ENCODE measurements at regions of chr2 and their contacts with region 1.

Region 1: DNA sequence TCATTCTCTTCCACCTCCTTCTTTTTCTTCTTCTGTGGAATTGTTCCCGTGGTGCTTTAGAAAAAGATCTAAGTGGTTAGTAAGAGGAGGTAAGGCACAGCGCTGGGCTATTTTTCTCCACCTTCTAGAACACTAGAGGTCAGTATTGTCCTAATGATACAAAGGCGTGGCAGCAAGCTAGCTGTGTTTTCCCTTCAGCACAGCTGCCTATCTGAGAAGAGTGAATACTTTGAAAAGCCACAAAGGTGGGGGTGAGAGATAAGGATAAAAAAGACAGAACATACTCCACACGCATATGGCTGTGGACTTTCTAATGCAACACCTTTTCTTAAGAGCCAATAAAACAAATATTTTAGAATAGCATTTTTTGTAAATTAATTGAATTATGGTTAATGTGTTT is 2.1 kb downstream of the CNTNAP5 start:
- DNase-seq: no peak
- ATAC-seq: peak in 3 of 4 donors; percentile 55 to 70 (median 63)
- H3K4me3 ChIP-seq: no peak overlapping the region
- H3K27ac ChIP-seq: no peak overlapping the region
- H3K4me1 ChIP-seq: peaks cover 0 to 9% (median 0%) of the 10 kb centered on the region in 12 donors
- H3K27me3 ChIP-seq: peaks cover 4 to 46% (median 29%) of the 10 kb centered on the region in 9 donors
- CTCF ChIP-seq: peak; percentile 39 to 68 (median 62)
- POLR2A ChIP-seq: no peak

Region 2: GRCh38 chr2:122905431-122905830 is 1121.8 kb before region 1 on chr2:
- intact Hi-C with region 1: no loop called
- DNase-seq: no peak
- ATAC-seq: no peak
- H3K4me3 ChIP-seq: no peak overlapping the region
- H3K27ac ChIP-seq: no peak overlapping the region
- H3K4me1 ChIP-seq: no peaks in the 10 kb centered on the region
- H3K27me3 ChIP-seq: no peaks in the 10 kb centered on the region
- CTCF ChIP-seq: no peak
- POLR2A ChIP-seq: no peak

Region 3: DNA sequence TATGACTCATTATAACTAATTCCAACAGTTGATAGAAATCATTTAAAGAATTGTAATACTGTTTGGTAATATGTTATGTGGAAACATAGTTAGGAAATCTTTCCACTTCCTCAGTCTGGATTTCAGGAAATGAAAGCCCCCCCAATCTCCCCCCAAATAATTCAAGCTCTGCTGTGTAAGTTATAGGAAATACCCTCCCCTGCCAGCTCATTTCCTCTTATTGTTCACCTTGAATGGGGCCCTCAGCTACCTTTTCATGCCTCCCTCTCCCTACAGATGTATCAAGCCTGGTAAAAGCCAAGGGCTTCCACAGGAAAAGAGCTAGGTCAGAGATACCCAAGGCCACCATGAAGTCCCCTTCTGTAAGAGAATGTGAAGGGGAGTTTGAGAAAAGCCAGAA is 153.5 kb after region 1 on chr2:
- intact Hi-C with region 1: no loop called
- DNase-seq: peak in 1 of 5 donors; percentile 18
- ATAC-seq: peak in 3 of 4 donors; percentile 16 to 65 (median 39)
- H3K4me3 ChIP-seq: no peak overlapping the region
- H3K27ac ChIP-seq: peak overlapping the region in 3 of 12 donors; percentile 16 to 28 (median 23)
- H3K4me1 ChIP-seq: peaks cover 0 to 8% (median 0%) of the 10 kb centered on the region in 12 donors
- H3K27me3 ChIP-seq: no peaks in the 10 kb centered on the region
- CTCF ChIP-seq: no peak
- POLR2A ChIP-seq: no peak

Region 4: DNA sequence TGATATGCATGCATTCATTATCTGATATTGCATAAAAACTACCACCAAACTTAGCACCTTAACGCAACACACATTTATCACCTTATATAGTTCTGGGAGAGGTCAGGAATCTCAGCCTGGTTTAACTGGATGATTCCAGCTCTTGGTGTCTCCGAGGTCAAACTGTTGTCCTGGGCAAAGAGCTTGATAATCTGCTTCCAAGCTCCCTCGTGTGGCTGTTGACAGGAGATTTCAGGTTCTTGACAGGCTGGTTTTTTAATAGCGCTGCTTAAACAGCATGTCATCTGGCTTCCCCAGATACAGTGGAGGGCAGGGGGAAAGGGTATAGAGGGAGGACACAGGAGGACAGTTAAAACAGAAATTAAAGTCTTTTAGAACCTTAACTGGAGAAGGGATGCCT is 783.0 kb after region 1 on chr2:
- intact Hi-C with region 1: loop called in 9 of 10 experiments (anchors 1 to 10 kb)
- DNase-seq: peak in 4 of 5 donors; percentile 23 to 45 (median 27)
- ATAC-seq: peak; percentile 42 to 80 (median 76)
- H3K4me3 ChIP-seq: no peak overlapping the region
- H3K27ac ChIP-seq: no peak overlapping the region
- H3K4me1 ChIP-seq: peaks cover 0 to 8% (median 0%) of the 10 kb centered on the region in 12 donors
- H3K27me3 ChIP-seq: no peaks in the 10 kb centered on the region
- CTCF ChIP-seq: peak in 10 of 12 donors; percentile 17 to 49 (median 31)
- POLR2A ChIP-seq: no peak

Measured in heart left ventricle (tissue), 16 donors.